Activated T-helper 1 cell treated with anti-CD3 and anti-CD28 coated beads, Interleukin-12 subunit alpha, Interleukin-12 subunit beta, Interleukin-2, Interleukin-4 antibody, amounts not matched to agents 30 ng/mL and 10 ng/mL and 1 ng/mL, durations not matched to agents 14 hours and 24 hours and 36 hours (primary cell): ENCODE measurements at regions of chr4 and their contacts with region 1.

Region 1: DNA sequence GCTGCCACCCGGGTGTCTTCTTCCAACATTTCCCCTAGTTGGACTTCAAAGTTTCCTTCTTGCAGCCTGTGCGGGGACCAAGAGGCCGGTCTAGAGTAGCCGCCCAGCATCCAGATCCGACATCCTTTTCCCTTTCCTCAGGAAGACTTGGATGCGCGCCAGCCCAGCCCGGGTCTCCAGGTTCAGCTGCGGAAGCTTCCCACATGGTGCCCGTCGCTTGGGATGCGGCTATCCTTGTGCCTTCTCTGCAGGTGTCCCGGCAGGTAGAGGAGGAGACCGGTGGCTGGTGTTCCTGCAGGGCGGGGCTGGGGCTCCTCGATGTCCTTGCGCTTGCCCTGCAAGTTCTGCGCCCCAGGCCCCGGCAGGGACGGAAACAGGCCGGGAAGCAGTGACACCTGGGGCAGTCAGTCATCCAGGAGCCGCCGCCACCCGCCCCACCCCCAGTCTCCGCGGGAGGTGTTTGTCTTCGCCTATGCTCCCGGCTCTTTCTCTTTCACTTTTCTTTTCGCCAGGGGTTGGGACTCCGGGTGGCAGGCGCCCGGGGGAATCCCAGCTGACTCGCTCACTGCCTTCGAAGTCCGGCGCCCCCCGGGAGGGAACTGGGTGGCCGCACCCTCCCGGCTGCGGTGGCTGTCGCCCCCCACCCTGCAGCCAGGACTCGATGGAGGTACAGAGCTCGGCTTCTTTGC is at the start of gene IL15:
- DNase-seq: peak; percentile 70
- H3K4me3 Mint-ChIP-seq: peak within 1 kb of the TSS; percentile 96
- H3K27ac Mint-ChIP-seq: peak within 1 kb of the TSS; percentile 81
- H3K4me1 Mint-ChIP-seq: peaks cover 25% of the 10 kb centered on the region
- H3K27me3 Mint-ChIP-seq: peaks cover 20% of the 10 kb centered on the region
- total RNA-seq, gene IL15: 0.67 and 1.8 TPM in 2 replicates

Region 2: DNA sequence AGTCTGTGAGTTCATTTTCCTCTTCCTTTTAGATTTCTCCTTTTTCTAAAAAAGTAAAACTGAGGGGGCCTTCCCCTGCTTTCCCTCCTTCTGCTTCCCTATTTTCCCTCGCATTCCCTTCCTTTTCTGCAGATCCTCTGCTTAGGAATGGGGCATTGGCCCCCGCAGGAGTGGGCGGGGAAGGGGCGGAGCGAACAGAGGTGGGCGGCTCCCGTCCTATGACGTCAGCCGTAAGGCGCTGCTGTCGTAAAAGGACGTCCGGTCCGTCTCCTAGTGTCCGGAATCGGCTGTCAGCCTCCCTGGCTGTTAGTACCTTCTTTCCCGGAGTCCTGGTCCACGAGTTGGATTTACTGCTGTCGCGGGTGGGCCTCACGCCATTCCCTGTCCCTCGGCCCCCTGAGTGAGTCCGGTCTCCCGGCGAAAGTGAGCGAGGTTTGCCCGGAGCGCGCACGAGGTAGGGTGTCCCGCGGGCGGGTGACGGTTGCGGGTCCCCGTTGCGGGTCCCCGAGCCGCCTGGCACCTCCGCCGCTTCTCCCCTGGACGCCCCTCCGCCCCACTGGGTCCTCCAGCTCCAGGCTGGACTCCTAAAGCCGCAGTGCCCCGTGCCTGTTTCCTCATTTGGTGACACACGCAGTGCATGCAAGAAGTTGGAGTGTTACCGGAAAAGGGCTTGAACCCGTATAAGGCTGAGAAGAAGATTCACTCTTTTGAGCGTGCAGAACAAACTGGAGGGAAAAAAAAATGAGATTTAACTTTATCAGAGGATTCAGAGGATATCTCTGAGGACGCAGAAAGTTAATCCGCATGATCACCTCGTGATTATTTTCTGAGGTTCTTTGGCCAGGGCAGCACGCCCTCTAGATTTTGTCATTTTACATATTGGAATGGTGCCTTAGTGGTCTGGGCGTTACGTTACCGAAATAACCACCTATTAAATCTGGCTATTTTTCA is 415.3 kb before region 1 on chr4 and contains the start of gene ZNF330:
- intact Hi-C with region 1: loop called (anchors 2 kb)
- DNase-seq: peak; percentile 83
- H3K4me3 Mint-ChIP-seq: peak within 1 kb of the TSS; percentile 93
- H3K27ac Mint-ChIP-seq: peak within 1 kb of the TSS; percentile 98
- H3K4me1 Mint-ChIP-seq: peaks cover 47% of the 10 kb centered on the region
- H3K27me3 Mint-ChIP-seq: peaks cover 6% of the 10 kb centered on the region
- total RNA-seq, gene ZNF330: 57.8 and 62.9 TPM in 2 replicates

Region 3: GRCh38 chr4:141435446-141436225 is 200.6 kb before region 1 on chr4:
- intact Hi-C with region 1: no loop called
- DNase-seq: no peak
- H3K4me3 Mint-ChIP-seq: no peak overlapping the region
- H3K27ac Mint-ChIP-seq: no peak overlapping the region
- H3K4me1 Mint-ChIP-seq: no peaks in the 10 kb centered on the region
- H3K27me3 Mint-ChIP-seq: no peaks in the 10 kb centered on the region

Region 4: DNA sequence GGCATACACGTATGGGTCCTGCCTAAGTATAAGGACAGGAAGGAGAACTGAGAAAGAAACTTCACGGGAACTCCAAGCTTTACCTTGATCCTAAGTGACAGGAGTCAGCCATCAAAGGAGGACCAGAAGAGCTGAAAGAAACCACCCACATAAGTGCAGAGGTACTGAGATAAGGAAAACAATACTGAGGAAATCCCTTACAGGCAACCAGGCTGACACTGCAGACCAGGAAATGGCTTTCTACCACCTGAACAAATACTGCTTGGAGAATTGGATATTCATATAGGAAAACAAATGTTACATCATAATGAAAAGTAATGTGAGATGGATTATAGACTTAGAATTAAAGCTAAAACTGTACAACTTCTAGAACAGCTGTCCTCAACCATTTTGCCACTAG is 127.1 kb after region 1 on chr4:
- intact Hi-C with region 1: no loop called
- DNase-seq: no peak
- H3K4me3 Mint-ChIP-seq: no peak overlapping the region
- H3K27ac Mint-ChIP-seq: no peak overlapping the region
- H3K4me1 Mint-ChIP-seq: no peaks in the 10 kb centered on the region
- H3K27me3 Mint-ChIP-seq: peaks cover 4% of the 10 kb centered on the region

Region 5: GRCh38 chr4:142211424-142211823 is 575.2 kb after region 1 on chr4:
- intact Hi-C with region 1: no loop called
- DNase-seq: no peak
- H3K4me3 Mint-ChIP-seq: no peak overlapping the region
- H3K27ac Mint-ChIP-seq: no peak overlapping the region
- H3K4me1 Mint-ChIP-seq: no peaks in the 10 kb centered on the region
- H3K27me3 Mint-ChIP-seq: no peaks in the 10 kb centered on the region

Region 6: DNA sequence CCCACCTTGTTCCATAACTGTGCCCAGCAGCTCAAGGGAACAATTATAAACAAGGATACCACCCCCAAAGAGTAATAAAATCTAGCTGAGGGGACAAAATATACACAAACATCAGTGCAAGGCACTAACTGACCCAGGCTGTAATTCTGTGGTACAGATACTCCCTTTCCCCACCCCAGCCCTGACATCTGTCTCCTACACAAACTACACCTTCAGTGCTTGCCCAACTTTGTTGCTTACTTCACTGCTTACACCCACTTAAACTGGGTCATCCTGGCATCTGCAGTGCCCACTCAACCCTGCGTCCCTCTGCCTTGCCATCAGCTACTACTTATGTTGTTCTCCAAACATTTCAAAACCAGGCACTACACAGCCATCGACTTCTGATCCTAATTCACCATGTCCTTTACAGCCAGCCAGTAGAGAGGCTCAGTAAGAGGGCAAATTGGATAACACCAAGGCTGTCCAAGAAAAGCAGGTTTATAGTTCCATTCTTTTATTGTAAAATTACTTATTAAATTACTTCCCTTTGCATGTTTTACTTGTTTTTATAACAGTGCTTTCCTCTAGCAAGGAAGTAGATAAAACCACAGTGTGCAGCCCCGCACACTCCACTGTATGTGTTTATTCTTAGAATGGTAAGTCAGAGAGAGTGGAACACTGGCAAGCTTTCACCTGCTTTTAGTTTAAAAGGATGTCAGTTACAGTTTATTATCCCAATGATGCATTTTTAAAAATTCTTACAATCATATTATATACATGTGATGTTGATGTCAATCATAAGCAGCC is 1060.3 kb after region 1 on chr4:
- intact Hi-C with region 1: loop called (anchors 10 kb)
- DNase-seq: no peak
- H3K4me3 Mint-ChIP-seq: peak overlapping the region; percentile 43
- H3K27ac Mint-ChIP-seq: peak overlapping the region; percentile 78
- H3K4me1 Mint-ChIP-seq: peaks cover 53% of the 10 kb centered on the region
- H3K27me3 Mint-ChIP-seq: no peaks in the 10 kb centered on the region

Region 7: GRCh38 chr4:142832022-142832421 is 1195.8 kb after region 1 on chr4:
- intact Hi-C with region 1: no loop called
- DNase-seq: no peak
- H3K4me3 Mint-ChIP-seq: no peak overlapping the region
- H3K27ac Mint-ChIP-seq: no peak overlapping the region
- H3K4me1 Mint-ChIP-seq: no peaks in the 10 kb centered on the region
- H3K27me3 Mint-ChIP-seq: peaks cover 4% of the 10 kb centered on the region